PC-9 (cell line): ENCODE measurements at regions of chr21 and their contacts with region 1.

Region 1: DNA sequence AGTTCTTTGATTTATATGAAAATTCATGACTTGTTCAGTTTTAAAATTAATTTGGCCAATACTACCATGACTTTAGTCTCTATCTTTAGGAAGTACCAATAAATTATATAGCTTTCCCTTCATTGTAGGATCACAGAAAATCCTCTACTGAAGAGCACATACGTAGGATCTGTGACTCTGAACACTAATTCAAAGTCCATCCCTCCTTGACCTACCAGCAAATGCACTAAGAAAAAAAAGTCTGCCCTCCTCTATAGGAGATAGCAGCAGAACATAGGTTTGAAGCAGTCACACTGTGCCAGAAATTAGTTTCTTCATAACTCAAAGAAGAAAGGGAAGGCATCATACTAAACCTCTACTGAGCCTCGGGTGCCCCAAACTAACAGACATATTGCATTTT is 16.5 kb downstream of the BRWD1 start:
- DNase-seq: no peak
- H3K4me3 ChIP-seq: no peak overlapping the region
- H3K27ac ChIP-seq: no peak overlapping the region
- H3K4me1 ChIP-seq: no peaks in the 10 kb centered on the region
- H3K27me3 ChIP-seq: no peaks in the 10 kb centered on the region
- CTCF ChIP-seq: no peak

Region 2: DNA sequence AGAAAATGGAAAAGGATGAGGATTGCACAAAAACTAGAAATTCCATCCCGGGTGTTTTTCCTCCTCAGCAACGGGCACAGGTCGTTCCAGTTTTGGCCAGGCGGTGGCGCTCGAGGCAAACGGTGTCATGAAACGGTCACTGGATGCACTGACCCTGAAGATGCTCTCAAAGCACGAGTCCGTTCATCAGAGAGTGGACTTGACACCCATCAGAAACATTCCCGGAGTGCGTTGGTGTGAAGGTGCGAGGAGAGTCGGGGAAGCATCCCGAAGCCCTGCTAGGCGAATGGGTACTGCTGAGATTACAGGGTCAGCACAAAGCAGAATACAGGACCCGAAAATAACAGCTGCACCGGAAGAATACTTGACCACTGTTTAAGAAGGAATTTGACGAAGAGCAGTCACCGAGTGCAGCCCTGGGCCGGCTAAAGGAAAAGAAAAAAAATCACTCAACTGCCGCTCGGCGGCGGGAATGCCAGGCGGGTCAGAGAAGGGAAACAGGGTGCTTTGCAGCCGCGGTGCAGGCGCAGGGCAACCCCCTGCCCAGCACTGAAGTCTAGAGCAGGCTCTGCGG is 562.8 kb before region 1 on chr21:
- CTCF ChIA-PET with region 1: no interaction called
- POLR2A ChIA-PET with region 1: no interaction called
- intact Hi-C with region 1: no loop called
- DNase-seq: peak; percentile 44 to 81
- H3K4me3 ChIP-seq: no peak overlapping the region
- H3K27ac ChIP-seq: no peak overlapping the region
- H3K4me1 ChIP-seq: no peaks in the 10 kb centered on the region
- H3K27me3 ChIP-seq: no peaks in the 10 kb centered on the region
- CTCF ChIP-seq: peak; percentile 89

Region 3: DNA sequence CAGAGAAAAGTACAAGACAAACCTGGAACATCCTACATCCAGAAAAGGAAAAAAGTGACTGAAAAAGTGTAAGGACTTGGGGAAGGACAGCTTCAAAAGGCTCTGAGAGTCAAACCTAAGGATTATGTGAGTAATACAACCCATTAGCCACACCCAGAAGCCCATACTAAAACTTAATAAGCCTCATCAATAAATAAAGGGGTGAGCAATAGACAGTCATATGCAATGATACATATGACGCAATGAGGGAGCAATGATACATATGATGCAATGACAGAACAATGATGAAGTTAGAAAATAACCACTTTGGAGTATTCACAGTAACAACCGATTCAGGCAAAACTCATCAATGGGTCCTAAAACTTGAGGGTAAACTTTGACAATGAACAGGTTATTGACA is 33.5 kb before region 1 on chr21:
- CTCF ChIA-PET with region 1: no interaction called
- POLR2A ChIA-PET with region 1: no interaction called
- intact Hi-C with region 1: loop called (anchors 5 kb)
- DNase-seq: no peak
- H3K4me3 ChIP-seq: no peak overlapping the region
- H3K27ac ChIP-seq: peak overlapping the region; percentile 34; the same call in 1 of the 2 replicates
- H3K4me1 ChIP-seq: no peaks in the 10 kb centered on the region
- H3K27me3 ChIP-seq: no peaks in the 10 kb centered on the region
- CTCF ChIP-seq: no peak

Region 4: DNA sequence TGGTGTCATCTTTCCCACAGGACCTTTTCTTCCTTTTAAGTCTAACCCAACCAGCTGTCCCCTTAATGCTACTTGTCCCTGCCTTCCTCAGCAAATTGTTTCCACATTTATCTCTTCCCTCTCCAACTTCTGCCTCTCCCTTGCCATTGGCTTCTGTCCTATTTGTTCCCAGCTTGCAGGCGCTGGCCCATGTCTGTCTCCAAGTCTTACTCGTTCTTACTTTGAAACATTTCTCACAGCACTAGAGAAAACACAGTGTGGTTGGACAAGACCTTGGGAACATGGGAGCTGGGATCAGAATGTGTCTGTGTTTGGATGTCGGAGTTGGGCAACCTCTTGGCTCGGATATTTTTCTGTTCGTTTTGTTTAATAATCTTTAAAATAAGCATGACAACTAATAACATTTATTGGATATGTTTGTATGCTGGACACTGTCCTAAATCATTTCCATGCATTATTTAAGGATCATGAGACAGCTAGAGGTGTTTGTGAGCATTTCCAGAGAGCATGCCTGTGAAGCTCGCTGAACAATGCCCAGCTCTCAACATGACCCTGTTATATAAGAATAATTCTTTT is 22.4 kb after region 1 on chr21:
- CTCF ChIA-PET with region 1: no interaction called
- POLR2A ChIA-PET with region 1: interaction called, 11 read pairs
- intact Hi-C with region 1: no loop called
- DNase-seq: no peak
- H3K4me3 ChIP-seq: no peak overlapping the region
- H3K27ac ChIP-seq: peak overlapping the region; percentile 32
- H3K4me1 ChIP-seq: peaks cover 53% of the 10 kb centered on the region
- H3K27me3 ChIP-seq: no peaks in the 10 kb centered on the region
- CTCF ChIP-seq: no peak

Region 5: GRCh38 chr21:39489380-39489924 is 192.6 kb after region 1 on chr21:
- CTCF ChIA-PET with region 1: no interaction called
- POLR2A ChIA-PET with region 1: no interaction called
- intact Hi-C with region 1: no loop called
- DNase-seq: no peak
- H3K4me3 ChIP-seq: no peak overlapping the region
- H3K27ac ChIP-seq: no peak overlapping the region
- H3K4me1 ChIP-seq: no peaks in the 10 kb centered on the region
- H3K27me3 ChIP-seq: no peaks in the 10 kb centered on the region
- CTCF ChIP-seq: no peak

Region 6: GRCh38 chr21:40129809-40130208 is 832.9 kb after region 1 on chr21:
- CTCF ChIA-PET with region 1: interaction called, 22 read pairs
- POLR2A ChIA-PET with region 1: no interaction called
- intact Hi-C with region 1: no loop called
- DNase-seq: no peak
- H3K4me3 ChIP-seq: no peak overlapping the region
- H3K27ac ChIP-seq: no peak overlapping the region
- H3K4me1 ChIP-seq: no peaks in the 10 kb centered on the region
- H3K27me3 ChIP-seq: peaks cover 4% of the 10 kb centered on the region
- CTCF ChIP-seq: no peak